ENCODE measurements at regions of chr20 and their contacts with region 1.

Region 1: DNA sequence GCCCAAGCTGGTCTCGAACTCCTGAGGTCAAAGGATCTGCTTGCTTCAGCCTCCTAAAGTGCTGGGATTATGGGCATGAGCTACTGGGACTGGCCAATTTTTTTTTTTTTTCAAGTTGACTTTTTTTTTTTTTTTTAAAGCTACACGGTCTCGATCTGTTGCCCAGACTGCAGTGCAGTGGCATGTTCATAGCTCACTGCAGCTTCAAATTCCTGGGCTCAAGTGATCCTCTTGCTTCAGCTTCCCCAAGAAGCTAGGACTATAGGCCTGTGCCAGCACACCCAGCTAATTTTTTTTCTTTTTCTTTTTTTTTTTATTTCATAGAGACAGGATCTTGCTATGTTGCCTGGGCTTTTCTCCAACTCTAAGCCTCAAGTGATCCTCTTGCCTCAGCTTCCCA is 59.5 kb downstream of the NCOA3 start:
- DNase-seq: no peak
- ATAC-seq: peak; percentile 19 to 63 (median 42)
- H3K4me3 ChIP-seq: no peak overlapping the region
- H3K27ac ChIP-seq: peak overlapping the region in 1 of 10 donors; percentile 5
- H3K4me1 ChIP-seq: peaks cover 3 to 97% (median 74%) of the 10 kb centered on the region in 9 donors
- H3K27me3 ChIP-seq: no peaks in the 10 kb centered on the region
- CTCF ChIP-seq: no peak

Region 2: GRCh38 chr20:47576516-47577033 is 15.4 kb after region 1 on chr20:
- intact Hi-C with region 1: loop called in 1 of 10 experiments (anchors 2 kb)
- DNase-seq: peak; percentile 39 to 83
- ATAC-seq: peak; percentile 88 to 97 (median 96)
- H3K4me3 ChIP-seq: peak overlapping the region in 7 of 10 donors; percentile 7 to 40 (median 34)
- H3K27ac ChIP-seq: peak overlapping the region in 9 of 10 donors; percentile 23 to 78 (median 51)
- H3K4me1 ChIP-seq: peaks cover 13 to 90% (median 71%) of the 10 kb centered on the region in 9 donors
- H3K27me3 ChIP-seq: no peaks in the 10 kb centered on the region
- CTCF ChIP-seq: peak in 1 of 9 donors; percentile 14